ENCODE measurements at regions of chr7 and their contacts with region 1.

Region 1: GRCh38 chr7:23531794-23532489 is at the start of gene TRA2A:
- DNase-seq: peak; percentile 97 to 99 (median 99)
- H3K4me3 ChIP-seq: peak within 1 kb of the TSS; percentile 64 to 100 (median 92)
- H3K27ac ChIP-seq: peak within 1 kb of the TSS; percentile 83 to 100 (median 98)
- H3K27me3 ChIP-seq: no peaks in the 10 kb centered on the region
- CTCF ChIP-seq: peak in 15 of 56 donors; percentile 5 to 43 (median 25)
- total RNA-seq, gene TRA2A: 73.3 to 142 (median 94.7) TPM

Region 2: DNA sequence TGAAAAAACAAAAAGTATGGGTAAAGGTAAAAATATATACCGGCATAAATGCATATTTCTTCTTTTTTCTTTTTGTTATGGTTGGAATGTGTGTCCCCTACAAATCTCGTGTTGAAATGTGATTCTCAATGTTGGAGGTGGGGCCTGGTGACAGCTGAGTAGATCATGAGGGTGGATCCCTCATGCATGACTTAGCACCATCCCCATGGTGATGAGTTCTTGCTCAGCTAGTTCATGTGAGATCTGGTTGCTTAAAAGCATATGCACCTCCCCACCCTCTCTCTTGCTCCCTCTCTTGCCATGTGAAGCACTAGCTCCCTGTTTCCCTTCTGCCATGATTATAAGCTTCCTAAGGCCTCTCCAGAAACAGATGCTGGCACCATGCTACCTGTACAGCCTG is 611.3 kb before region 1 on chr7:
- intact Hi-C with region 1: no loop called
- DNase-seq: no peak
- H3K4me3 ChIP-seq: no peak overlapping the region
- H3K27ac ChIP-seq: no peak overlapping the region
- H3K27me3 ChIP-seq: no peaks in the 10 kb centered on the region
- CTCF ChIP-seq: no peak

Region 3: GRCh38 chr7:23181684-23182553 is 350.0 kb before region 1 on chr7 and contains the start of gene NUP42:
- intact Hi-C with region 1: loop called in 1 of 2 experiments (anchors 5 kb)
- DNase-seq: peak; percentile 86 to 94 (median 92)
- H3K4me3 ChIP-seq: peak within 1 kb of the TSS; percentile 64 to 100 (median 90)
- H3K27ac ChIP-seq: peak within 1 kb of the TSS; percentile 42 to 98 (median 89)
- H3K27me3 ChIP-seq: no peaks in the 10 kb centered on the region
- CTCF ChIP-seq: peak in 37 of 56 donors; percentile 13 to 59 (median 24)
- total RNA-seq, gene NUP42: 26.1 to 58.3 (median 39.5) TPM

Region 4: DNA sequence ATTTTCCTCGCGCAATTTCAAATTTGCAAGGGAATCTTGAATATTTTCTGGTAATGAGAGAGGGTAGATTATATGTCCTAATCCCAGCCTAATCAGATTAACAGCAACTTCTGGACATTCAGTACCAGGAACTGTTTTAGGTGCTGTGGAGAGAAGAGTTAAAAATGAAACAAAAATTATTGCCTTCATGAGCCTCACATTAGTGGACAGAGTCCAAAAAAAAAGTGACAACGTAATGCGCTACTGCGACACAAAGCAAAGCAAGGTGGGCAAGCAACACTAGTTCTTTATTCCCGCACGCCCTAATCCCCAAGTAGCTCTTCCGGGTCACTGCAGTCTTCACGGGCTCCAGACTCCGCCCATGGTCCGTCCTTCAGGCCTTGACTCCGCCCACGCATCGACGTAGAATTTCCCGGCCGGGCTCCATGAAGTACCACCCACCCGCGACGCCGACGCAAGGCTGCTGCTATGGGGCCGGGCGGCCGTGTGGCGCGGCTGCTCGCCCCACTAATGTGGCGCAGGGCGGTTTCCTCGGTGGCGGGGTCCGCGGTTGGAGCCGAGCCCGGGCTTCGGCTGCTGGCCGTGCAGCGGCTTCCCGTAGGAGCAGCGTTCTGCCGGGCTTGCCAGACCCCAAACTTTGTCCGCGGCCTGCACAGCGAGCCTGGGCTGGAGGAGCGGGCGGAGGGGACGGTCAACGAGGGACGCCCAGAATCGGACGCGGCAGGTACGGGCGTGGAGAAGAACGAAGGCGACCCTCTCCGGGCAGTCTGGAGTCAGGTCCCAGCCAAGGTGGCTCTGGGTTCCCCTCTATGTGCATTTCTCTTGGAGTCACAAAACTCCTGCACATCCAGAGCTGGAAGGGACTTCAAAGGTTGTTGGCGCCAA is 232.8 kb before region 1 on chr7 and contains the start of gene MALSU1:
- intact Hi-C with region 1: loop called in 1 of 2 experiments (anchors 5 kb)
- DNase-seq: peak; percentile 96 to 99 (median 98)
- H3K4me3 ChIP-seq: peak within 1 kb of the TSS; percentile 57 to 99 (median 92)
- H3K27ac ChIP-seq: peak within 1 kb of the TSS in 56 of 59 donors; percentile 3 to 89 (median 78)
- H3K27me3 ChIP-seq: no peaks in the 10 kb centered on the region
- CTCF ChIP-seq: peak in 30 of 56 donors; percentile 7 to 53 (median 24)
- total RNA-seq, gene MALSU1: 27.0 to 68.5 (median 47.7) TPM

Region 5: GRCh38 chr7:23597094-23598091 is 65.5 kb after region 1 on chr7 and contains the start of gene CCDC126:
- intact Hi-C with region 1: loop called in 1 of 2 experiments (anchors 10 kb)
- DNase-seq: peak; percentile 83 to 96 (median 92)
- H3K4me3 ChIP-seq: peak within 1 kb of the TSS; percentile 57 to 97 (median 86)
- H3K27ac ChIP-seq: peak within 1 kb of the TSS; percentile 74 to 99 (median 94)
- H3K27me3 ChIP-seq: no peaks in the 10 kb centered on the region
- CTCF ChIP-seq: peak in 32 of 56 donors; percentile 9 to 56 (median 30)
- total RNA-seq, gene CCDC126: 11.7 to 28.0 (median 16.8) TPM

Region 6: DNA sequence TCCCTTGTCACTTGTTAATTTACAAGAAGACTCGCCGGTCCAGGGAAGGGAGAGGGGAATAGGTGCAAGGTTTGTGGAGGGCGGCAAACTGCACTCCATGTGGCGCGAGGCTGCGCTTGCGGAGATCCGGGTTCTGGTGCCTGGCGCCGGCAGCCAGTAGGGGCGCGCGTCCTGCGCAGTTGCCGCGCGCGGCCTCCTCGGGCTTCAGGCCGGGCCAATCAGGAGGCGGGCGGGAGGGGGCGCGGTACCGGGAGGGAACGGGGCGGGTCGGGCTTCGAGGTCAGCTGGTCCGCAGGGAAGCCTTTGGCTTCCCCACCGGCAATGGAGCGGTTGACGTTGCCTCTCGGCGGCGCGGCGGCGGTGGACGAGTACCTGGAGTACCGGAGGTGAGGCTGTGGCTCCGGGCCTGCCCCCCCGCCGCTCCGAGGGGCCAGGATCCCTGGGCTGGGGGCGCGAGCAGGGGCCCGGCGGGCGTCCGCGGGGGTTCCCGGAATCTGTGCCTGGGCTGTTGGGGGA is 148.0 kb after region 1 on chr7 and contains the start of gene FAM221A:
- intact Hi-C with region 1: loop called in 1 of 2 experiments (anchors 1 kb)
- DNase-seq: peak; percentile 83 to 94 (median 90)
- H3K4me3 ChIP-seq: peak within 1 kb of the TSS; percentile 65 to 99 (median 92)
- H3K27ac ChIP-seq: peak within 1 kb of the TSS; percentile 68 to 100 (median 93)
- H3K27me3 ChIP-seq: no peaks in the 10 kb centered on the region
- CTCF ChIP-seq: peak; percentile 25 to 85 (median 72)
- total RNA-seq, gene FAM221A: 10.1 to 49.8 (median 22.1) TPM